HEK293T (cell line): ENCODE measurements at regions of chr5 and their contacts with region 1.

Region 1: GRCh38 chr5:150778517-150779396 is at the start of gene SMIM3:
- DNase-seq: peak; percentile 74

Region 2: GRCh38 chr5:150758531-150759333 is 20.0 kb before region 1 on chr5 and contains the start of gene DCTN4:
- CTCF ChIA-PET with region 1: interaction called, 6 read pairs
- POLR2A ChIA-PET with region 1: interaction called, 32 read pairs
- DNase-seq: peak; percentile 92

Region 3: DNA sequence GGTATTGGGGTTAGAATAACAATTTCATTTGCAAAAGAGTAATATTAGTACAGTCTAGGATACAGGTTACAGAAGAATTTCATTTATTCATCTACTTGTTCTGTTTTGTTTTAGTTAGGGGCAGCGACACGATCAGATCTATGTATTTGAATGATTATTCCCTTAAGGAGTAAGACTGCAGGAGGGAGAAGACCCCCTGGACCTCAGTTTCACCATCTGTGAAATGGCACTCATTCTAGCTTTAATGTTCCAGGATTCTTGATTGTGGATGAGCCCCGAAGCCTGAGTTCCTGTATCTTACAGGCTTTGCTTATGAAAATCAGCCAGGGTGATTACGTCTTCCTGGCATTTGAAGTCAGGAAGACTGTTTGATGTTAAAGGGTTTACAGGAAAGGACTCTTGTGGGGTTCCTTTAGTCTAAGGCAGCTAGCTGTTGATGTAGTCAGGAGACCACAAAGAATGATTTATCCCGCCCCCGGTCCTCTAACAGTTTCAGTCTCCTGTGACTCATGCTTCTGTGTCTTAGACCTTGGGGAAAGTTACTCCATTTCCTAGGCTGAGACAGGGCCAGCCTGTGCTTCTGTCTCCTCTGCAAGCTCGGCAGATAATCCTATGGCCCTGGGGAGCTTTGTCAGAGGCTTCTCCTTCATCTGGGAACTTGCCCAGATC is 11.3 kb after region 1 on chr5:
- CTCF ChIA-PET with region 1: no interaction called
- POLR2A ChIA-PET with region 1: interaction called, 11 read pairs
- DNase-seq: no peak

Region 4: DNA sequence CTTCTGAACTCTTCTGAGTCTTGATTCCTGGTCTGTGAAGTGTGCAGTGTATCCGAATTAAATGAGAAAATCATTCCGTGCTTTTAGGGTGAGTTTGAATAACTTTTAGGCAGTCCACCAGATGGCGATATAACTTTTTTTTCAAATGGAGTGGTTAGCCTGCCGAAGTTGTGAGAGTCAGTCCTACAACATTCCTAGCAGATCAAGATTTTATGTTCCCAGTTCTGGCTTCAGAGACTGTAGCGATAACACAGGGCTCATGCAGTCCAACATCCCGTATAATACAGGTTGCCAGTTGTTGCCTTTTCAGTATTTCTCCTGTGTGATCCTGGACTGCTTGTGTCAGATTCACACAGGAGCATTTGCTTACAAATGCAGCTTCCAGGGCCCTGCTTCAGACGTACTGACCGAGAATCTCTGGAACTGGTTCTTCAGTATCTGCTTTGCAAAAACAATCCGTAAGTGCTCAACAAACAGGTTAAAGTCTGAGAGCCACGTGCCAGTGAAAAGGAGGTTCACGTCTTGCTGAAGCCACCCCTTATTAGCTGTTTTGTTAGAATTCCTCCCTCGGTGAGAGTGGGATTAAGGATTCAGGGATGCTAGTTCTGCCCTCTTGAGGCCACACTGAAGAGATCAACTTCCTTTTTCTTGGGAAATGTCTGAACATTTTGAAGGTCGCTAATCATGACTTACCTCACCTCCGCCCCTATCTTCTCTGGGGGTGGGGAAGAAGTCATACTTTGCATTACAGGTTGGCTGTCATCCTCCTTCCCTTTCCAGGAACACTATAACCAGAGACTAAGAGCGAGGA is 22.6 kb after region 1 on chr5:
- CTCF ChIA-PET with region 1: interaction called, 12 read pairs
- POLR2A ChIA-PET with region 1: interaction called, 7 read pairs
- DNase-seq: peak; percentile 66